SK-N-SH (cell line): ENCODE measurements at regions of chr3 and their contacts with region 1.

Region 1: DNA sequence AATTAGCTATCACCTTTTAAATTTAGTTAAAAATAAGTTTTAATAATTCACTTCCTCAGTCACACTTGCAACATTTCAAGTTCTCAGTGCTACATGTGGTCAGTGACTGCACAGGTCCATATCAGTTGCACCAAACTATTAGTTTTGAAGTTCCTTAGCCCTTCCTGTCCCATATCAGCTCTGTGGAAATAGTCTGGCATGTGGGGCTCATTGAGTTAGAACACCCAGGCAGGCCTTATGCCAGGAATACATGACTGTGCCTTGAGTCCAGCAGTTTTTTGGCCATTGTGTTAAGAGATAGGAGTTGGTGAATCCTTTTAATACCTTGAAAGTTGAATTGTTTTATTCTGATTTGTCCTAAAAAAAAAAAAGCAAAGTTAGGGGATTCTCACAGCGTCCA is 153.7 kb upstream of the BFSP2 start:
- DNase-seq: peak; percentile 38
- H3K4me3 ChIP-seq: no peak overlapping the region
- H3K27ac ChIP-seq: peak overlapping the region in 1 of 2 experiments; percentile 99; a peak in 3 of 4 replicates
- H3K4me1 ChIP-seq: peaks cover 0 to 35% of the 10 kb centered on the region in 2 experiments; a peak in 2 of 4 replicates
- H3K27me3 ChIP-seq: no peaks in the 10 kb centered on the region
- CTCF ChIP-seq: no peak
- EP300 ChIP-seq: peak in 1 of 2 experiments; percentile 62; a peak in 2 of 4 replicates
- RAD21 ChIP-seq: no peak

Region 2: GRCh38 chr3:131925571-131925970 is 1320.5 kb before region 1 on chr3:
- CTCF ChIA-PET with region 1: no interaction called
- POLR2A ChIA-PET with region 1: no interaction called
- DNase-seq: no peak
- H3K4me3 ChIP-seq: no peak overlapping the region
- H3K27ac ChIP-seq: no peak overlapping the region
- H3K4me1 ChIP-seq: no peaks in the 10 kb centered on the region
- H3K27me3 ChIP-seq: no peaks in the 10 kb centered on the region
- CTCF ChIP-seq: no peak
- EP300 ChIP-seq: no peak
- RAD21 ChIP-seq: no peak

Region 3: DNA sequence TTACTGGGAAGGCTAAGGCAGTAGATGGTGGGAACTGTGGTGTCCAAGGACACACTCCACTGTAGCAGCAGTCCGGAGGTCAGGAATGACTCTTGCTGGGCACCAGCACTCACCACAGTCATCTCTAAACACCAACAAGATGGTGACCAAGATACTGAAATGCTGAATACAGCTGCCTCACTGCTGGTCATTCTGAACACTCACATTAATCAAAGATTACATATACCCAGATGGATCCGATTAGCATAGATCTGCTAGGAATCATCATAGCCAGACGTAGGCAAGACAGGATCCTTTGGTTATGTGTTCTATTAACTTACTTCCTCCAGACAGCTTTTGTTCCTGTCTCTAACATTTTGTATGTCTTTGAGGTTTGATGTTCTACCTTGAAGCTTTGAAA is 18.8 kb after region 1 on chr3:
- CTCF ChIA-PET with region 1: interaction called, 15 read pairs
- POLR2A ChIA-PET with region 1: interaction called, 3 read pairs
- DNase-seq: peak; percentile 35
- H3K4me3 ChIP-seq: no peak overlapping the region
- H3K27ac ChIP-seq: peak overlapping the region; percentile 58 to 97; a peak in 3 of 4 replicates
- H3K4me1 ChIP-seq: peaks cover 4 to 53% of the 10 kb centered on the region in 2 experiments; a peak in 2 of 4 replicates
- H3K27me3 ChIP-seq: no peaks in the 10 kb centered on the region
- CTCF ChIP-seq: no peak
- EP300 ChIP-seq: peak; percentile 79 to 92
- RAD21 ChIP-seq: 0 out of 2 replicates have a peak, but pooled peaks have one; percentile 3

Region 4: GRCh38 chr3:133362539-133362938 is 116.4 kb after region 1 on chr3:
- CTCF ChIA-PET with region 1: no interaction called
- POLR2A ChIA-PET with region 1: no interaction called
- DNase-seq: no peak
- H3K4me3 ChIP-seq: no peak overlapping the region
- H3K27ac ChIP-seq: no peak overlapping the region
- H3K4me1 ChIP-seq: peaks cover 0 to 16% of the 10 kb centered on the region in 2 experiments; a peak in 2 of 4 replicates
- H3K27me3 ChIP-seq: no peaks in the 10 kb centered on the region
- CTCF ChIP-seq: no peak
- EP300 ChIP-seq: no peak
- RAD21 ChIP-seq: no peak